ENCODE measurements at regions of chr10 and their contacts with region 1.

Region 1: GRCh38 chr10:34739915-34740314 is 75.2 kb downstream of the PARD3 start:
- DNase-seq: peak; percentile 79 to 86
- ATAC-seq: peak; percentile 87 to 95
- H3K4me3 ChIP-seq: peak overlapping the region; percentile 1 to 34 (median 22)
- H3K27ac ChIP-seq: peak overlapping the region; percentile 71 to 88 (median 75)
- H3K4me1 ChIP-seq: peaks cover 42 to 67% of the 10 kb centered on the region in 2 donors
- H3K27me3 ChIP-seq: no peaks in the 10 kb centered on the region
- CTCF ChIP-seq: no peak
- POLR2A ChIP-seq: peak in 1 of 2 donors; percentile 62

Region 2: DNA sequence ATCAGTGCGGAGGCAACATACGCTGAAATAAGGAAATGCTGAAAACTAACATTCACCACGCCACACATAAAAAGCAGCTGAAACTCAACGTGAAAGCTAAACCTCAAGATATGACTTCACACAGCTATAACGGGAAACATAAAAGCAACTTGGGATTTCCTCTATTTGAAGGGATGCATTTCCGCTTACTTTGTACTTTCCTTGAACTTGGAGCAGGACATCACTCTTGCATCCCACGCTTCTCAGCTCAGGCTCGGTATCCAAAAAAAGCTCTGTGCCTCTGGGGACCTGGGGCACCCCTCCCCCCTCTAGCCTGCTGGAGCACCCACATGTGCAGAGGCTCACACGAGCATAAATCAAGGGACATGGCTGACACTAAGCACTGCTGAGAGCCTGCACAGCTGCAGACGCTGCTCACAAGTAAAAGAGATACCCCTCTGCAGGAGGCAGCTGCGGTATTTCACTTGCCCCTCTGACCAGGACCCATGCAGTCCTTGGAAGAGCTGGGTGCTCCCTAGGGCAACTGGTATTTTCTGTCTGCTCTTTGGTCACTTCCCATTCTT is 41.0 kb after region 1 on chr10:
- in situ Hi-C with region 1: no loop called
- intact Hi-C with region 1: loop called (anchors 5 kb)
- DNase-seq: peak; percentile 59 to 78
- ATAC-seq: peak; percentile 83 to 90
- H3K4me3 ChIP-seq: peak overlapping the region in 2 of 4 donors; percentile 13 to 22
- H3K27ac ChIP-seq: peak overlapping the region; percentile 39 to 74 (median 58)
- H3K4me1 ChIP-seq: peaks cover 43 to 67% of the 10 kb centered on the region in 2 donors
- H3K27me3 ChIP-seq: no peaks in the 10 kb centered on the region
- CTCF ChIP-seq: no peak
- POLR2A ChIP-seq: no peak

Region 3: GRCh38 chr10:35103882-35104281 is 364.0 kb after region 1 on chr10:
- in situ Hi-C with region 1: no loop called
- intact Hi-C with region 1: no loop called
- DNase-seq: no peak
- ATAC-seq: no peak
- H3K4me3 ChIP-seq: no peak overlapping the region
- H3K27ac ChIP-seq: no peak overlapping the region
- H3K4me1 ChIP-seq: no peaks in the 10 kb centered on the region
- H3K27me3 ChIP-seq: no peaks in the 10 kb centered on the region
- CTCF ChIP-seq: no peak
- POLR2A ChIP-seq: no peak

Measured in gastrocnemius medialis (tissue), 4 donors.